Psoas muscle (tissue), 8 donors: ENCODE measurements at regions of chr2 and their contacts with region 1.

Region 1: GRCh38 chr2:16665748-16666448 is at the start of gene CYRIA:
- DNase-seq: peak; percentile 75 to 86
- ATAC-seq: peak; percentile 72 to 86 (median 78)
- H3K4me3 ChIP-seq: peak within 1 kb of the TSS; percentile 78
- H3K27ac ChIP-seq: peak within 1 kb of the TSS; percentile 67
- H3K4me1 ChIP-seq: peaks cover 33% of the 10 kb centered on the region
- H3K27me3 ChIP-seq: no peaks in the 10 kb centered on the region
- CTCF ChIP-seq: no peak
- total RNA-seq, gene CYRIA: 9.5 to 16.8 (median 10.9) TPM

Region 2: DNA sequence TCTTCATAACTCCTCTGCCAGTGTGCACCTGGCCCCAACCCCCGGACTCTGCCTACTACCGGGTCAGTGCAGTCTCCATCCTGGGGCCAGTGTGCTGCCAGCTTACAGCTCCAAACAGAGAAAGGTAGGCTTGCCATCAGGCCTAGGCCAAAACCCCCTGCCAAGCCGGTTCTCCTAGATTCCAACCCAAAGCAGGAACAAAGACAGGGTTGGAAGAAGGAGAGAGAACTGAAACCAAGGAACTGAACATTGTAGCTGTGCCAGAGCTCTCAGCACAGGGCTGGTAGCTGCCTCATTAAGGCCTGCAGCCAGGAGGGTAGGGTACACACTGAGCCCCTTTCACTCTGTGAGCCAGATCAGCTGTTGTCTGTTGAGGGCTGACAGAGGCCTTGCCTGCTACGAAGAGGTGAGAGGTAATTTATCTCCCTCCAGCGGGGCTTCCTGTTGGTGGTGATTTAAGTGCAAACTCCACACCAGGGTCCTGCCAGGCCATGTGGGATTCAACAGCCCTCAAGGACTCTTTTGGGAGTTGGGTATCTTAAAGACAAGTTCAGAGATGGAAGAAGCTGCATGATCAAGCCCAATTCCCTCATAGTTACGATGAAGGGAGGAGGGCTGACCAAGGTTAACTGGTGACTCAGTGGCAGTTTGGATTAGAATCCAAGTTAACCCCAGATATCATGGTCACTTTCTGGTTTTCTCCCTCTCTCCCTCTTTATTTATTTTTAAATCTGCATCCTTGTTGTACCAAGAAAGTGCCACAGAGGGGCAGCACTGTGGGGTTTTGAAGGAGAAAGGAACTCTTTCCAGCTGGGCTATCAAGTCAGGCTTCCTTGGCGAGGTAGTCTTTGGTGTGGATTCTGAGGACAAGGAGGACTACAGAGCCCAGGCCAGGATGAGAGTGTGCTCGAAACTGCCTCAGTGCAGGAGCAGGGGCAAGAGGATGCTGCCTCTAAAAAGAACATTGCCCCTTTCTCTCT is 48.3 kb before region 1 on chr2:
- intact Hi-C with region 1: loop called in 1 of 2 experiments (anchors 5 kb)
- DNase-seq: no peak
- ATAC-seq: peak; percentile 26 to 66 (median 48)
- H3K4me3 ChIP-seq: no peak overlapping the region
- H3K27ac ChIP-seq: no peak overlapping the region
- H3K4me1 ChIP-seq: peaks cover 22% of the 10 kb centered on the region
- H3K27me3 ChIP-seq: no peaks in the 10 kb centered on the region
- CTCF ChIP-seq: peak; percentile 55

Region 3: DNA sequence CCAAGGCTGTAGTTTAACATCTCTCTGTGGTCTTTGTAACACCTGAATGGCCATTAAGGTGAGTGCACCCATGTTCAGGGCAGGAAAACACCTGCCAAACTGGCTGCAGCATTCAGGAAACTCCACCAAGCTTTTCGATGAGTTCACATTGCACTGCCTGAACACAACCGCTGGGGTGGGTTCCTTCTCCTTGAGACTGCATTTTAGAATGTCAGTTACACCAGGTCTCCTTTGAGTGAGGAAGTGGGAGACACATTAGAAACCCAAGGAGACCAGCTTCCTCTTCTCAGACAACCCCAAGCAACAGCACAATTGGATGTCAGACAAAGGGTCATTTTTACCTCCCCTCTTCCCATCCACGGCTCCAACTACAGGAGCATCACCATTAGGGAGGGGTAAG is 35.4 kb before region 1 on chr2:
- intact Hi-C with region 1: loop called in 1 of 2 experiments (anchors 5 kb)
- DNase-seq: no peak
- ATAC-seq: no peak
- H3K4me3 ChIP-seq: no peak overlapping the region
- H3K27ac ChIP-seq: no peak overlapping the region
- H3K4me1 ChIP-seq: peaks cover 89% of the 10 kb centered on the region
- H3K27me3 ChIP-seq: no peaks in the 10 kb centered on the region
- CTCF ChIP-seq: no peak

Region 4: GRCh38 chr2:16727256-16727655 is 61.4 kb after region 1 on chr2:
- intact Hi-C with region 1: loop called in 1 of 2 experiments (anchors 5 kb)
- DNase-seq: no peak
- ATAC-seq: peak; percentile 52 to 76 (median 69)
- H3K4me3 ChIP-seq: no peak overlapping the region
- H3K27ac ChIP-seq: no peak overlapping the region
- H3K4me1 ChIP-seq: peaks cover 10% of the 10 kb centered on the region
- H3K27me3 ChIP-seq: no peaks in the 10 kb centered on the region
- CTCF ChIP-seq: peak; percentile 16